GM13977 (cell line): ENCODE measurements at regions of chr1 and their contacts with region 1.

Region 1: DNA sequence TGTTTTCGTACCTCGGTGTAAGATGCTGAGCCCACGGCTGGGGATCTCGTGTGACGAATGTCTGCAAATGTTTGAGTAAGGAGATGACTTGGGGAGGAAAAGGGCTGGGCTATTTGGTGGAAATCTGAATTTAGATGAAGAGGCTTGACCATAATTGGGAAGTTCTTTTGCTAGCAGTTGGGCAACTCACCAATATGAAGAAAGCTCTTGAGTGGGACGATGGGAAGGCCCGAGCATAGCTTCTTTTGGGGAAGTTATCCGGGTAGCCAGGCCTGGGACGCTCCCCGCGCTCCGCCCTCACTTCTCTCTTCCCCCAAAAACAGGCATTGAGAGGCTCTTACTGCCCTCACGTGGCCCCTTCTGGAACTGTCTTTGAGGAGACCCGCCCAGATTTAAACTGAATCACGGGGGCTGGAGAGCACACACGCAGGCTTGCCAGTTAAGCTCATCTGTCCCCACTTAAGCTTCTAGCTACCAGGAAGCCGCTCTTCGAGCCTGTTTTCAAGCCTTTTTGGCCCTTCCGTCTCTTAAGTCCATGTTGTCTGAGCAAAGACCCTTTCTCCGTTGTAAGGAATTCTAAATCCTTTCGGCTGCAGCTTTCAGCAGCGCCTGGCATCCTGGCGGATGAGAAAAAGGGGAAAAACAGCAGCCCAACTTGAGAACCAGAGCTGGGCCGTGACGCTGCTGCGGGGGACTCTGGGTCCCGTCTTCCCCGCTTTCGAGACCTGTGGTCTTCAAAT is 93.1 kb downstream of the NID1 start:
- DNase-seq: peak; percentile 84
- CTCF ChIP-seq: peak; percentile 81

Region 2: DNA sequence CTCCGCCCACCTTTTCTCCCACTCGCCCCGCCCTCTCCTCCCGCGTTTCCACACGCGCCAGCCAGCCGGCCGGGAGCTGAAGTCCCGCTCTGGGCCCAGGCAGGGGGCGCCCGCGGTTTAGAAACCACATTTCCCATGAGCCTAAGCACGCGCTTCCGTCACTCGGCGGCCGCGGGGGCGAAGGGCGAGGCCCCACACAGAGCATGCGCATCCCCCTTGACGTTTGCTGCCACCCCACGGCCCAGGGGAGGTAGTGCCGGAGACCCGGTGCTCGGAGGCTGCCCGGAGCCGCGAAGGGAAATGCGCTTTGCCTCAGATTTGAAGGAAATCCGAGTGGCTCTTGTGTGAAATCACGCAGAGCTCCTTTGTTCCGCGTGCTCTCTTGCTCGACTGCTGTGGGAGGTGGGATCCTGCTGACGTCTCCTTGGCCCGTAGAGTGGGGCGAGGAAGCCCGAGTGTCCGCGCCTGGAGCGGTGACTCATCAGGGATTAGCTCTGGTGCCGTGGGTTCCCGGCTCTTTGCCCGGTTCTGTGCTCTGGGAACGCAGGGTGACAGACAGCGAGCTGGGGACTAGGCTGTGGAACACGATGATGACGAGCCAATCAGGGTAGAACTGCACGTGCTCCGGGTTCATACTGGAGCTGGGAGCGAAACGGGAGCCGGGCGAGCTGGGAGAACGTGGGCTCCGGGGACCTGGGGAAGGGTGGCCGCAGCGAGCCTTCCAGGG is 467.1 kb before region 1 on chr1:
- in situ Hi-C with region 1: loop called (anchors 25 kb)
- DNase-seq: peak; percentile 96
- CTCF ChIP-seq: peak; percentile 74

Region 3: DNA sequence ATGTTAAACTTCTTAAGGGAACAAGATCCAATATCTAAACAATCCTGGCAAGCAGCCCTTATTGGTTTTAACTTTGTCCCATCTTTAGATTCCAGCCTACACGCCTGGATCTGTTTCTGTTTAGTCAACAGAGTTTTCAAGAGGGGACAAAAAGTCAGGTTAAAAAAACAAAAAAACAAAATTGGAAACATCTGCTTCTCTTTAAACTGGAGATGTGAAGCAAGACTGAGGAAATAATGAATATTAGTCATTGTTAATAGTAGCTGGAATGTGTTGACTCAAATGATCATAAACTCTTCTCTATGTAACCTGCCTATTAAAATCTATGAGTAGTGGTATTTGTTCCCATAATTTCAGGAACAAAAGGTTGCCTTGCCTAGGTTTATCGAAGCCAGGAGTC is 38.1 kb after region 1 on chr1:
- in situ Hi-C with region 1: no loop called
- DNase-seq: no peak
- CTCF ChIP-seq: no peak